Activated CD4-positive, alpha-beta memory T cell treated with anti-CD3 and anti-CD28 coated beads, Interleukin-2, amount 10 ng/mL, durations not matched to agents 7 days and 5 days (primary cell): ENCODE measurements at regions of chr6 and their contacts with region 1.

Region 1: GRCh38 chr6:45714741-45715507 is 300.7 kb downstream of the CLIC5 start:
- DNase-seq: peak; percentile 64
- H3K4me3 Mint-ChIP-seq: peak overlapping the region; percentile 23
- H3K27ac Mint-ChIP-seq: peak overlapping the region; percentile 75
- H3K4me1 Mint-ChIP-seq: peaks cover 41% of the 10 kb centered on the region
- H3K27me3 Mint-ChIP-seq: no peaks in the 10 kb centered on the region

Region 2: GRCh38 chr6:44655412-44656342 is 1059.2 kb before region 1 on chr6:
- CTCF ChIA-PET with region 1: interaction called, 16 read pairs
- POLR2A ChIA-PET with region 1: interaction called, 4 read pairs
- DNase-seq: peak; percentile 77
- H3K4me3 Mint-ChIP-seq: peak overlapping the region; percentile 21
- H3K27ac Mint-ChIP-seq: peak overlapping the region; percentile 71
- H3K4me1 Mint-ChIP-seq: peaks cover 10% of the 10 kb centered on the region
- H3K27me3 Mint-ChIP-seq: no peaks in the 10 kb centered on the region

Region 3: DNA sequence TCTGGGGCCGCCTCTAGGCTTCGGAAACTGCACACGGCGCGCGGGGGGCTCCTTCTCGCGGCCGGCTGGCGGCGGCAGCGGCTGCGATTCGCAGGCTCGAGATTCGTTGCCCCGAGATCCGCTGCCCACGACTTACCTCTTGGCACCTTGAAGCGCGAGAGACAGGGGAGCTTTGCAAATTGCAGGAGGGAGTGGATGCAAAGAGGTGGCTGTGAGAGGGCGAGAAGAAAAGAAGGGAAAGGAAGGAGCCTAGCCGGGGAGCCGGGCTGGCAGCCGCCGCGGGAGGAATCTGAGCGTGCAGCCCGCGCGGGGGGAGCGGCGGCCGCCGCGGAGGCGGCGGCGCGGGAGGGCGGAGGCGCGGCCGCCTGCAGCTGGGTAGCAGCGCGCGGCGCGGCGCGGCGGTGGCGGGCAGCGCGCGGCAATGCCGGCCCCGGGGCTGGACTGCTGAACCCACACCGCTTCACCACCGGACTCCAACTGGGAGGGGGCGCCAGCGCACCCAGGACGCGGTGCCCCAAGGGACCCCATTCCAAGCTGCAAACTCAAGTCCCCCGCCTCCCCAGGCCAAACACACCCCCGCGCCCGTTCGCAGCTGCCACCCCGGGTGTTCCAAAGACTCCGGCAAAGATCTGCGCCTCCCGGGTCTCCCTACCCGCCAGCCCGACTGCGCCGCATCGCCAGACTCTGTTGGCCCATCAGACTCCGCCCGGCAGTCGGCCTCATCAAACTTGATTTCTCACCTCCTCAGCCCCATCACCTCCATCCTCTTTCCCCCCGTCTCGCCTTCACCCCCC is 293.0 kb before region 1 on chr6:
- CTCF ChIA-PET with region 1: interaction called, 28 read pairs
- POLR2A ChIA-PET with region 1: interaction called, 27 read pairs
- DNase-seq: peak; percentile 65
- H3K4me3 Mint-ChIP-seq: peak overlapping the region; percentile 99
- H3K27ac Mint-ChIP-seq: peak overlapping the region; percentile 98
- H3K4me1 Mint-ChIP-seq: peaks cover 42% of the 10 kb centered on the region
- H3K27me3 Mint-ChIP-seq: peaks cover 2% of the 10 kb centered on the region

Region 4: DNA sequence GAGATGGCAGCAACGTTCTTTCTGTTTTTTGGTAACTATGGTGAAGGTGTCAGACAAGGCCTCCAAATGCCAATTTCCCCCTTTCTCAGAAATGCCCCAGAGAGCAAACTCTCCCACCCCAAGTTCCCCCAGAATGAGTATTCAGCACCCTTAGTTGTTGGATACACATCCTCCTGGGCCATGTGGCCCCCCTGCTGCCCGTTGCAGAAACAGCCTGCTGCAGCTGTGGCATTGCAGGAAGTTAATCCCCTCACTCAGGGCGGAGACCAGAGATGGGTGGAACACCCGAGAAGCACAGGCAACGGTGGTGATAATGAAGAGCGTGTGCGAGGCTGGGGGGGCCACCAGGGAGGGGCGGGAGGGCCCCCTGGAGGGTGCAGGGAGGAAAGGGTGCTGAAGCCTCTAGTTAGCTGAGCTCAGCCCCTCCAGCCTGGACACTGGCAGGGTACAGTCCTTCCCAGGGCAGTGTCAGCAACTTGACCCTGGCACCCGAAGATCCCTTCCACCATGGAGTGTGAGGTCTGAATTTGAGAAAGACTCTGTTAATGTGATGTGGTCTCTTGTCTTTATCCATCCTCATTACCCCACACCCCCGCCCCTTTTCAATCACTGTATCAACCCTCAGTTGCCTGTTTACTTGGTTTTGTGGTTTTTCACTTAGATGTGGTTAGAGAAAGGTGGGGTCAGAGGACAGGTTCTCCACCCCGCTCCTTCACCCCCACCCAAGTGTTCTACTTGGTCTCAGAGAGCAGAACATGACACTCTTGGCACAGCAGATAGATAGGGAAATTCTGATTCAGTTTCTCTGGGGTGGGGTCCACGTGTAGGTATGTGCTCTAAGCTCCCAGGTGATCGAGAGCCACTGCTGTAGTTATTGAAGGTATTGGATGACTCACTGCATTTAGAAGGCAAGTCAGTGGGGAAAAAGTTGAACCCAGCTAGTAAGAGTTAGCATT is 128.4 kb before region 1 on chr6:
- CTCF ChIA-PET with region 1: interaction called, 20 read pairs
- POLR2A ChIA-PET with region 1: interaction called, 8 read pairs
- DNase-seq: peak; percentile 81
- H3K4me3 Mint-ChIP-seq: peak overlapping the region; percentile 54
- H3K27ac Mint-ChIP-seq: peak overlapping the region; percentile 94
- H3K4me1 Mint-ChIP-seq: peaks cover 77% of the 10 kb centered on the region
- H3K27me3 Mint-ChIP-seq: no peaks in the 10 kb centered on the region

Region 5: DNA sequence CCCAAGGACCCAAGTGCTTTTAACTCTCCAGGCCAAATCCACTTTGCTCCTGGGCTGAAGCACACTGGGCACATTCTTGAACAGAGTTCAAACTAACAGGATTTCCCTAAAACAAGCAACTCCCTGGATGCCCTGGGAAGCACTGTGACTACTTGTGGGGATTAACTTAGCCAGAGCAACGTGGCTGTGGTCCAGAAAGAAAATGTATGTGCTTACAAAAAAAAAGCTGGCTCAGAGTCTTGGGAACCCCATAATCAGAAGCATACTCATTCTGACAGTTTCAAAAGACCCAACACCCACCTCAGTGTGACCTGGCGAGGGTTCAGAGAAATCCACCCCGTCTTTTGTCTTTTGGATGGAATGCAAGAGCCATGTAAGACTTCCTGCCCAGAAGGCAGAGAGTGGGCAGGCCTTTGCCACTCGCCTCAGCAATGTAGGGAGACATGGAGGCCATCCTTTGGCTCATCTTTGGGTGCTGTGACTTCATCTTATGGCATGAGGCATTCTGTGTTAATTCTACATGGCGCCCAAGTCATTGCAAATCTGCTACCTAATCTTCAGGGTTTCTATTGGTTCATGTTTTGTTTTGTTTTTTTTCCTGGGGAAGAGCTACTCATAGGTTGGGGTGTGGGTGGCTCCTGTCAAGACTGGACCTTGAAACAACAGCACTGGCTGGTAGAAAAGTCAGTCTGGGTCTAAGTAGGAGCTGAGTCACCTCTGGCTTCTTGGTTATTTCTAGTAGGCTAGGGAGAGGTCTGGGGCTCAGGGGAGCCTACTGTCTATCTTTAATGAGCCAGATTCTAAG is 88.6 kb before region 1 on chr6:
- CTCF ChIA-PET with region 1: no interaction called
- POLR2A ChIA-PET with region 1: no interaction called
- DNase-seq: no peak
- H3K4me3 Mint-ChIP-seq: no peak overlapping the region
- H3K27ac Mint-ChIP-seq: peak overlapping the region; percentile 23
- H3K4me1 Mint-ChIP-seq: peaks cover 42% of the 10 kb centered on the region
- H3K27me3 Mint-ChIP-seq: no peaks in the 10 kb centered on the region

Region 6: DNA sequence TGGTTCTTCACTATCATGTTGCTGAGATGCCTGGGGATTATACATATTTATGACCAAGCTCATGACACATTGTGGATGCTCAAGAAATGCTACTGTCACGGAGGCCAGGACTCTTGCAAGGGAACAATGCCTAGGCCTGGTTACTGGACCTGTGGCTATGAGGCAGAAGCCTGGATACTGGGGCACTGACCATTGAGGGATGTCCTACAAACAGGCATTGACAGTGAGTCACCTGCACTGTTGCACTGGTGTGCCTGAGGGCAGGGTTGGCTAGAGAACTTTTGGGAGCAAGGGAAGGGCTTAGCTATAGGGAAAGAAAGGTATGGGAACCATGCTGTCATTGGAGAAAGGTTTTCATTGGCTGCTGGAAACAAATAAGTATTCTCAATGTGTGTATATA is 24.1 kb before region 1 on chr6:
- CTCF ChIA-PET with region 1: no interaction called
- POLR2A ChIA-PET with region 1: no interaction called
- DNase-seq: no peak
- H3K4me3 Mint-ChIP-seq: no peak overlapping the region
- H3K27ac Mint-ChIP-seq: no peak overlapping the region
- H3K4me1 Mint-ChIP-seq: peaks cover 16% of the 10 kb centered on the region
- H3K27me3 Mint-ChIP-seq: no peaks in the 10 kb centered on the region

Region 7: GRCh38 chr6:45922728-45923351 is 207.9 kb after region 1 on chr6:
- CTCF ChIA-PET with region 1: interaction called, 23 read pairs
- POLR2A ChIA-PET with region 1: interaction called, 6 read pairs
- DNase-seq: peak; percentile 82
- H3K4me3 Mint-ChIP-seq: peak overlapping the region; percentile 13
- H3K27ac Mint-ChIP-seq: peak overlapping the region; percentile 80
- H3K4me1 Mint-ChIP-seq: peaks cover 54% of the 10 kb centered on the region
- H3K27me3 Mint-ChIP-seq: no peaks in the 10 kb centered on the region